Kidney (tissue), 22 donors: ENCODE measurements at regions of chr6 and their contacts with region 1.

Region 1: DNA sequence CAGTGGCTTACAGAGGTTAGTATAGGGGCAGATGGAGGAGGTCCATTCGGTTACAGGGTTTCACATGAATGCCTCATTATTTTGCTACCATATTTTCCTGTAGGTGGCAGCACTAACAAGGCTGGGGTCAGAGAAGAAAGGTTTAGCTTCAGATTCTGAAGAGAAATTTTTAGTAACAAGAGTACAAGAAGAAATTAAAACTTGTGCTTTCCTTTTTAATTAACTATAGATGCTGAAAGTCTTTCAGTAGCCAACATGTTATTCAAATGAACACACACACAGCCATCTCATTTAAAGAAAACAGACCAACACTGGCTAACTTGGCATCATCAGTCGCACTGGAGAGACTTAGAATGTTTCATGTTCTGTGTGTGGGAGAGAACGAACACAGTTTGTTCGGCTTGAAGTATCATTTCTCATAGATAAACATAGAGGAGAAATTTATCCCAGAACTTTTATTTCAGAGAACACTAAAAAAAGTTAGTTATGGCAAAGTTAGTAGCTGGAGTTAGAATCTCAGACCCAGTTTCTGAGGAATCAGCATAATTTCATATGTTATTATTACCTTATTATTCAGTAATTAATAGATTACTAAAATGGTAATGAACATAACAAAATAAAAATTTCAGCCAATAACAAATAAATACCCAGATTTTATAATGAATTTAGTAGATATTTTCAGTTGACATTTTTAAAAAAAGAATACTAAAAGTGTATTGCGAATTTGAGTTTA is 314.0 kb upstream of the RSPO3 start:
- DNase-seq: peak in 3 of 5 donors; percentile 35 to 83 (median 78)
- H3K4me3 ChIP-seq: no peak overlapping the region
- H3K27ac ChIP-seq: no peak overlapping the region
- H3K4me1 ChIP-seq: no peaks in the 10 kb centered on the region
- H3K27me3 ChIP-seq: no peaks in the 10 kb centered on the region
- CTCF ChIP-seq: peak; percentile 56

Region 2: GRCh38 chr6:127085181-127085580 is 280.7 kb after region 1 on chr6:
- intact Hi-C with region 1: loop called (anchors 10 kb)
- DNase-seq: no peak
- H3K4me3 ChIP-seq: no peak overlapping the region
- H3K27ac ChIP-seq: no peak overlapping the region
- H3K4me1 ChIP-seq: no peaks in the 10 kb centered on the region
- H3K27me3 ChIP-seq: no peaks in the 10 kb centered on the region
- CTCF ChIP-seq: no peak